Breast epithelium (tissue), 4 donors: ENCODE measurements at regions of chr17 and their contacts with region 1.

Region 1: DNA sequence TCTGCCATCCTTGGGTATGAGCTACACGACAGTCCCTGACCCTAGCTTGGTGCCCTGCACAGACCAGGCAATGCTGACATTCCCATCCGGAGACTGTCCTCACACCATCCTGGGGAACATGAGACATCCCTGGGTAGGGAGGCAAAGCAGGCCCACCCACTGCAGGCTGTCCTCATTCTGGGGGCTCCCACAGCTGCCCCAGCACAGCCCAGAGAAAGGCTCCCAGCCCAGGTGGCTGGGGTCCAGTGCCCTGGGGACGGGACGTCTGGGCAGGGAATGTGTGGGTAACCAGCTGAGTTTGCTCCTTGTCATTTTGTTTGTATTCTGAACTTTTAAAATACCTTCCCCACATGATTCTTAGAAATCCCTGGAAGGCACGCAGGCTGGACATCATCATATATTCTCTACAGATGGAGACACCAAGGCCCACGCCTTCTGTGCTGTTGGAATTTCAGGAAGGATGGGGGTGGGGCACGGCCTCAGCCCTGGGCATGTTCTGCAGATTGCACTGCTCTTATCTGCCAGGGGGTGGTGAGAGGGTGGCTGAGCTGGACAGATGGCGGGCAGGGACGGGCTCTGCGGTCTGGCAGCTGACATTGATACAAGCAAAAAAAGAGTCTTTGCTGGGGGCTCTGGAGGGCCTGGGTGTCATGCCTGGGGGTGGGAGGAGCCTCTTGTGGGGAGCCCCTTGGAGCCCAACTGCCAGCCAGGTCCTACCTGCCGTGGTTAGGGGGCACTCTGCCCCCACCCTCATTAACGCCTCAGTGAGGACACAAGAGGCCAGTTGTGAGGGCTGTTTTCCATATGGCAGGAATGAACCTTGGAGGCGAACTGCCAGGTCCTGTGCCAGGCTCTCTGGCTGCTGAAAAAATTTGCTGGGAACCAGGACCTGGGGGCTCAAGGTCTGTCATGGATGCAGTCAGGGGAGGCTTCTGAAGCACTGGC is 28.4 kb downstream of the LRRC75A start:
- DNase-seq: no peak
- H3K4me3 ChIP-seq: no peak overlapping the region
- H3K27ac ChIP-seq: no peak overlapping the region
- H3K4me1 ChIP-seq: no peaks in the 10 kb centered on the region
- H3K27me3 ChIP-seq: no peaks in the 10 kb centered on the region
- CTCF ChIP-seq: no peak
- POLR2A ChIP-seq: no peak

Region 2: DNA sequence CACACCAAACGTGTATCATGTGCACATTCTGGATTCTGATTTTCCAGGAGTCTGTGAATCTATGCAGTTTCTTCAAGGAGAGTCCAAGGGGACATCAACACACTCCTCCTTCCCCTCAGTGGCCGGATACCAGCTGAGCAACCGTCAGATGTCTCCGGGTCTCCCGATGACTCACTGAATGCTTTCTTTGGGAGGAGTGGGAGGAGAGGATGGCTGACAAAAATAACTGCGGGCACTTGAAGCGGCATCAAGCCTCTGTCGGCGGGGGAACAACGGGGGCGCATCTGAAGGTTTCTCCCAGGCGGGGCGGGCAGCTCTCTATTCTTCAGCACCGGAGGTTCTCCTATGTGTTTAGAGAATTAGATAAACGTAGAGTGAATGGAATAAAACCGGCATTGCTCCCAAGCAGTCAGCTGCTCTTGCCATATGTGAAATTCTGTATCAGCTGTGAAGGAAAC is 53.0 kb after region 1 on chr17:
- intact Hi-C with region 1: loop called (anchors 10 kb)
- DNase-seq: no peak
- H3K4me3 ChIP-seq: peak overlapping the region in 2 of 3 donors; percentile 18 to 25
- H3K27ac ChIP-seq: no peak overlapping the region
- H3K4me1 ChIP-seq: no peaks in the 10 kb centered on the region
- H3K27me3 ChIP-seq: no peaks in the 10 kb centered on the region
- CTCF ChIP-seq: no peak
- POLR2A ChIP-seq: no peak